Endothelial cell of umbilical vein (primary cell): ENCODE measurements at regions of chr3 and their contacts with region 1.

Region 1: DNA sequence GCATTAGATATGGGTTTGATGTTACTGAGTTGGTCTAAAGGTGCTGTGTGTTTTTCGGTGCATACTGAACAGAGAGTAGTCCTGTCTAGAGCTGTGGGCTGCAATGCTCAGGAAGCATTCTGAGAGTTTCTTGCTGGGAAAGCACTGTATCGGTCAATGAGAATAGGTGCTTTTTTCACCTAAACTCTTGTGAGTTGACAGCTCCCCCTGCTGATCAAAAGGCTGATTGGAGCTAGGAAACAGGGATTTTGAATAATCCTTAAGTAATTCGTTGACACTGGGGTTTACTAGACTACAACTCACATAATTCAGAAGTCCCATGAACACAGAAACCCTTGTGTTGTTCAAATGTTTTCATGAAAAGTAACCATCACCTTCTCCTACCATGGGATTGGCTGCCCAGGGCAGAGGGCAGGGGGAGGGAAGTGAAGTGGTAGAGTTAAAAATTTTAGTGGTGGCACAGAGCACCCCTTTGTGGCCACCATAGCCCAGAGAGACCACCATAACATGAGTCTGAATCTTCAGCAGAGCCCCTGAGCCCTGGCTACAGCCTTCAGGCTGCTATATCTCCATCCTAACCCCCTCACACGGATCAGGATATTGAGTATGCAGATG is 13.0 kb upstream of the MANF start:
- DNase-seq: peak; percentile 71
- H3K4me3 ChIP-seq: no peak overlapping the region
- H3K27ac ChIP-seq: no peak overlapping the region
- H3K4me1 ChIP-seq: no peaks in the 10 kb centered on the region
- H3K27me3 ChIP-seq: no peaks in the 10 kb centered on the region
- CTCF ChIP-seq: peak; percentile 60 to 63
- POLR2A ChIP-seq: no peak

Region 2: GRCh38 chr3:50617096-50617791 is 754.8 kb before region 1 on chr3 and contains the start of gene MAPKAPK3:
- CTCF ChIA-PET with region 1: interaction called, 64 read pairs
- POLR2A ChIA-PET with region 1: no interaction called
- dilution Hi-C with region 1: no loop called
- intact Hi-C with region 1: loop called (anchors 1 kb)
- DNase-seq: peak; percentile 27
- H3K4me3 ChIP-seq: peak within 1 kb of the TSS; percentile 71 to 83 (median 76)
- H3K27ac ChIP-seq: no peak within 1 kb of the TSS
- H3K4me1 ChIP-seq: peaks cover 19% of the 10 kb centered on the region
- H3K27me3 ChIP-seq: no peaks in the 10 kb centered on the region
- CTCF ChIP-seq: no peak
- POLR2A ChIP-seq: peak; percentile 26
- total RNA-seq, gene MAPKAPK3: 18.5 and 21.3 TPM in 2 replicates

Region 3: GRCh38 chr3:50674349-50675178 is 697.5 kb before region 1 on chr3 and contains the start of gene DOCK3:
- CTCF ChIA-PET with region 1: interaction called, 4 read pairs
- POLR2A ChIA-PET with region 1: no interaction called
- dilution Hi-C with region 1: no loop called
- intact Hi-C with region 1: loop called (anchors 1 kb)
- DNase-seq: peak; percentile 59
- H3K4me3 ChIP-seq: peak within 1 kb of the TSS in 1 of 3 experiments; percentile 29
- H3K27ac ChIP-seq: no peak within 1 kb of the TSS
- H3K4me1 ChIP-seq: peaks cover 5% of the 10 kb centered on the region
- H3K27me3 ChIP-seq: peaks cover 52 to 71% of the 10 kb centered on the region in 2 experiments
- CTCF ChIP-seq: no peak
- POLR2A ChIP-seq: no peak
- total RNA-seq, gene DOCK3: 0.13 and 0.16 TPM in 2 replicates

Region 4: DNA sequence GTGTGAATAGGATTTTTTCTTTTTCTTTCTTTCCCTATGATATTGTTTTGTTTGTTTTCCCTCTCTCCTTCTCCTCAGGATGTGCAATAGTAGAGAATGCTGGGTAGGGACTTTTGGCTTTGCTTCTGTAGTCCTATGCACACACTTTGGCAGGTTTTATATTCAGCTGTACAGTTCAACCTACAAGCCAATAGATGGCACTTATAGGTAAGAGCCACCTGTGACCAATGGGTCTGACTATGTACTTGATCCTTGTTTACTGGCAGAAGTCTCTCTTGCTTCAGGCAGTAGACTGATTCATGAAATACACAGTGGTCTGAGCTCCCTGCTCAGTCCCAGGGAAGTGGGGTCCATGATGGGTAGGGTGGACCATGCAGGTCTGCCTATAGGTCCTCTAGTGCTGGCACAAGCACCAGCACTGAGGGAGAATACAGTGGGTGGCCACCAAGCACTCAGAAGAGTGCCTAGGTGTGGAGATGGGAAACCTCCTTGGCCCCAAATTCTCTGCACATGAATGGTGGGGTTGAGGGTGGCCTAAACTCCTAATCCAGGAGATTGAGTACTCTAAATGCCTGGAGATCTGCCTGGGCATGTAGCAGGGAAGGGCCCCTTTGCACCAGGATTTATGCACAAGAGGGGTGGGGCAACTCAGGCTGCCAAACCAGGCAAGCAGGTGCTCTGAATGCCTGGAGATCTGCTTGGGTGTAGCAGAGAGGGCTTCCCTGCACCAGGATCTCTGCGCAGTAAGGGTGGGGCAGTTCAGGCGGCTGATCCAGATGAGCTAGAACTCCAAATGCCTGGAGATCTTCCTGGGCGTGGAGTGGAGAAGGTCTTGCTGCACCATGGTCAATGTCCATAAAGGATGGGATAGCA is 521.2 kb before region 1 on chr3:
- CTCF ChIA-PET with region 1: no interaction called
- POLR2A ChIA-PET with region 1: no interaction called
- dilution Hi-C with region 1: no loop called
- intact Hi-C with region 1: no loop called
- DNase-seq: no peak
- H3K4me3 ChIP-seq: no peak overlapping the region
- H3K27ac ChIP-seq: no peak overlapping the region
- H3K4me1 ChIP-seq: no peaks in the 10 kb centered on the region
- H3K27me3 ChIP-seq: no peaks in the 10 kb centered on the region
- CTCF ChIP-seq: no peak
- POLR2A ChIP-seq: no peak

Region 5: DNA sequence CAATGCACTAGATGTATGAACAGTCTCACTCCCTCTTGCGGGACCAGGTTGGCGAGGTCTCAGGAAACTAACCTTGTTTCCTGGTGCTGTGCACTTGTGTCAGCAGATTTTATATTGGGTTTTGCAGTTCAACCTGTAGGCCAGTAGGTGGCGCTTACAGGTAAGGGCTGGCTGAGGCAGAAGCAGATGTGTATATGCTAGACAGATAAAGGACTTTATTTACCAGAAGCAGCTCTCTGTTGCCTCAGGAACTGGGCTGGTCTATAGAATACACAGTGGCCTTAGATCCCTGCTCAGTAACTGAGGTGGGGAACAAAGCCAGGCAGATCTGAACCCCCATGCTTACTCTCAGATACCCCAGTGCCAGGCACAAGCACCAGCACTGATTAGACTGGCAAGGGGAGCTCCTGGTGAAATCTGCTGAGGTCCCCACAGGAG is 400.5 kb before region 1 on chr3:
- CTCF ChIA-PET with region 1: interaction called, 90 read pairs
- POLR2A ChIA-PET with region 1: no interaction called
- dilution Hi-C with region 1: no loop called
- intact Hi-C with region 1: loop called (anchors 2 kb)
- DNase-seq: peak; percentile 45
- H3K4me3 ChIP-seq: no peak overlapping the region
- H3K27ac ChIP-seq: no peak overlapping the region
- H3K4me1 ChIP-seq: no peaks in the 10 kb centered on the region
- H3K27me3 ChIP-seq: no peaks in the 10 kb centered on the region
- CTCF ChIP-seq: peak; percentile 75 to 78
- POLR2A ChIP-seq: no peak

Region 6: DNA sequence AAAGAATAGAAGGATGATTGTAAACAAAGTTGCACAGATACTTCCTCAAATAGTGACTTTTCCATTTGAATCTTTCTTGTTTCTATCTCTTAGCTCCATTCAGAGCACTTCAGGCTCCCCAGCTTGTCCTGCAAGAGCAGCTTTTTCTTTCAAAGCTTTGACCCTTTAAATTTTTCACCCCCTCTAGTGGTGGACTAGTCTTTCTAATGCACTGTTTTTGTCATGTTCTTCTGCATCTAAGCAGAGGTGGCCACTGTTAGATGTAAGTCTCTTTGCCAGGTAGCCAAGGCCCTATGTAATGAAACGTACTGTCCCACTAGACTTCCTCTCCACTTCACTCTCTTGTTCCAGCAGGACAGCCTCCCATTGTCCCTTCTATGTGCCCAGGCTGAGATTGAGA is 61.0 kb before region 1 on chr3:
- CTCF ChIA-PET with region 1: interaction called, 12 read pairs
- POLR2A ChIA-PET with region 1: no interaction called
- dilution Hi-C with region 1: no loop called
- intact Hi-C with region 1: no loop called
- DNase-seq: peak; percentile 31
- H3K4me3 ChIP-seq: no peak overlapping the region
- H3K27ac ChIP-seq: no peak overlapping the region
- H3K4me1 ChIP-seq: no peaks in the 10 kb centered on the region
- H3K27me3 ChIP-seq: no peaks in the 10 kb centered on the region
- CTCF ChIP-seq: peak in 1 of 2 donors; percentile 32
- POLR2A ChIP-seq: no peak